ENCODE measurements at regions of chr10 and their contacts with region 1.

Region 1: GRCh38 chr10:103476046-103476995 is 2.7 kb downstream of the CALHM3 start:
- DNase-seq: no peak
- ATAC-seq: no peak
- H3K4me3 ChIP-seq: no peak overlapping the region
- H3K27ac ChIP-seq: no peak overlapping the region
- H3K4me1 ChIP-seq: peaks cover 0 to 3% (median 0%) of the 10 kb centered on the region in 3 donors
- H3K27me3 ChIP-seq: no peaks in the 10 kb centered on the region
- CTCF ChIP-seq: no peak

Region 2: GRCh38 chr10:103316087-103316486 is 160.2 kb before region 1 on chr10:
- intact Hi-C with region 1: no loop called
- DNase-seq: no peak
- ATAC-seq: no peak
- H3K4me3 ChIP-seq: no peak overlapping the region
- H3K27ac ChIP-seq: no peak overlapping the region
- H3K4me1 ChIP-seq: no peaks in the 10 kb centered on the region
- H3K27me3 ChIP-seq: no peaks in the 10 kb centered on the region
- CTCF ChIP-seq: no peak

Region 3: GRCh38 chr10:103336370-103336769 is 140.0 kb before region 1 on chr10:
- intact Hi-C with region 1: no loop called
- DNase-seq: no peak
- ATAC-seq: no peak
- H3K4me3 ChIP-seq: no peak overlapping the region
- H3K27ac ChIP-seq: no peak overlapping the region
- H3K4me1 ChIP-seq: no peaks in the 10 kb centered on the region
- H3K27me3 ChIP-seq: no peaks in the 10 kb centered on the region
- CTCF ChIP-seq: no peak

Region 4: GRCh38 chr10:103433858-103434257 is 42.5 kb before region 1 on chr10:
- intact Hi-C with region 1: loop called in 1 of 3 experiments (anchors 5 kb)
- DNase-seq: no peak
- ATAC-seq: peak in 3 of 4 donors; percentile 38 to 71 (median 46)
- H3K4me3 ChIP-seq: no peak overlapping the region
- H3K27ac ChIP-seq: no peak overlapping the region
- H3K4me1 ChIP-seq: no peaks in the 10 kb centered on the region
- H3K27me3 ChIP-seq: no peaks in the 10 kb centered on the region
- CTCF ChIP-seq: no peak

Measured in pancreas (tissue), 10 donors.